Activated CD4-positive, alpha-beta memory T cell treated with anti-CD3 and anti-CD28 coated beads for 36 hours (primary cell): ENCODE measurements at regions of chr3 and their contacts with region 1.

Region 1: GRCh38 chr3:72665701-72666443 is 182.4 kb downstream of the SHQ1 start:
- DNase-seq: peak; percentile 69
- H3K4me3 Mint-ChIP-seq: no peak overlapping the region
- H3K27ac Mint-ChIP-seq: no peak overlapping the region
- H3K4me1 Mint-ChIP-seq: no peaks in the 10 kb centered on the region
- H3K27me3 Mint-ChIP-seq: no peaks in the 10 kb centered on the region

Region 2: GRCh38 chr3:72538070-72538745 is 127.7 kb before region 1 on chr3:
- CTCF ChIA-PET with region 1: no interaction called
- POLR2A ChIA-PET with region 1: no interaction called
- intact Hi-C with region 1: no loop called
- DNase-seq: peak; percentile 40
- H3K4me3 Mint-ChIP-seq: no peak overlapping the region
- H3K27ac Mint-ChIP-seq: no peak overlapping the region
- H3K4me1 Mint-ChIP-seq: peaks cover 21% of the 10 kb centered on the region
- H3K27me3 Mint-ChIP-seq: peaks cover 7% of the 10 kb centered on the region

Region 3: DNA sequence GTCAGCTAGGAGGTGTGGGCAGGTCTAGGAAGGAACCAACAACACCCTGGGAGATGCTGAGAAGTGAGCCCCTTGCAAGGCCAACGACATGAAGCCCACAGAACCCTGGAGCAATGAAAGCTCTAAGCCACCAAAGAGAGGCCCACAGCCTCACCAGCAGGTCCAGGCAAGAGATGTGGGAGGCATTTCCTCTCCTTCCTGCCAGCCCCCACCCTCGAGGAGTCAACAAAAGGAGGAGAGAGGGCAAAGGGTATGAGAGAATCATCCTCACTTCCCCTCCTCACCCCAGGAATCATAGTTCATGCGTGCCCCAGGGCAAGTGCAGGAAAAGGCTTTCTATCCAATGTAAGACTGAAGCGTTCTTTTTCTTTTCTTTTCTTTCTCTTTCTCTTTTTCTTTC is 13.5 kb before region 1 on chr3:
- CTCF ChIA-PET with region 1: interaction called, 17 read pairs
- POLR2A ChIA-PET with region 1: no interaction called
- intact Hi-C with region 1: no loop called
- DNase-seq: no peak
- H3K4me3 Mint-ChIP-seq: no peak overlapping the region
- H3K27ac Mint-ChIP-seq: no peak overlapping the region
- H3K4me1 Mint-ChIP-seq: peaks cover 2% of the 10 kb centered on the region
- H3K27me3 Mint-ChIP-seq: peaks cover 8% of the 10 kb centered on the region

Region 4: DNA sequence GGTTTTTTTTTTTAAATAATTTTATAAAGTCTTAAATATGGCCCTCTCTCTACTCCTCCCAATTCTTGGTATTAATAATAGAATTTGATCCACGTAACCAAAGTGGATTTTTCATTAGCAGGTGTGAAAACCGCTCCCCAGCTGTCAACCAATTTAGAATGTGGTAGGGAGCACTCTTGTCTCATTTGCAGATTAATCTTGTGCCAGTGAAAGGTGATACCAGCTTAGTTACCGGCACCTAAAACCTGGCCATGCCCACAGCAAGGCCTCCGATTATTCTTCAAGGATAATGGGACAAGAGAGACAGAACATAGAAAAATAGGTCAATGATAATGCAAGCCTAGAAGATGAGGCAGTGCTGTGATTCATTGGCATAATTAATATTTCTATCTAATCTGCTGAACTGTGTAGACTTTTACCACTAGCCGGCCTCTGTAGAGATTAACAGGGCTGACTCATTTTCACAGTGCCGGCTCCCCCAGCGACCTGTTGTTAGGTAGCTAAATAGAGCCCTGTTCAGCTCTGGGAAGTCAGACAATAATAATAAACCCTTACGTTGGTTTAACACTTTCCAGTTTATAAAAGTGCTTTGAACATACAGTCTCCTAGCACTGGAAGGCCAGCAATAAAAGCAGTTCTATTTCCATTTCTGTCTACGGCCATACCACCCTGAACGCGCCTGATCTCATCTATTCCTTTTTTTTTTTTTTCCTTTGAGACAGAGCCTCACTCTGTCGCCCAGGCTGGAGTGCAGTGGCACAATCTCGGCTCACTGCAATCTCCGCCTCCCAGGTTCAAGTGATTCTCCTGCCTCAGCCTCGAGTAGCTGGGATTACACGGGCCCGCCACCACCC is 79.5 kb after region 1 on chr3:
- CTCF ChIA-PET with region 1: no interaction called
- POLR2A ChIA-PET with region 1: no interaction called
- intact Hi-C with region 1: no loop called
- DNase-seq: no peak
- H3K4me3 Mint-ChIP-seq: no peak overlapping the region
- H3K27ac Mint-ChIP-seq: no peak overlapping the region
- H3K4me1 Mint-ChIP-seq: peaks cover 2% of the 10 kb centered on the region
- H3K27me3 Mint-ChIP-seq: no peaks in the 10 kb centered on the region

Region 5: DNA sequence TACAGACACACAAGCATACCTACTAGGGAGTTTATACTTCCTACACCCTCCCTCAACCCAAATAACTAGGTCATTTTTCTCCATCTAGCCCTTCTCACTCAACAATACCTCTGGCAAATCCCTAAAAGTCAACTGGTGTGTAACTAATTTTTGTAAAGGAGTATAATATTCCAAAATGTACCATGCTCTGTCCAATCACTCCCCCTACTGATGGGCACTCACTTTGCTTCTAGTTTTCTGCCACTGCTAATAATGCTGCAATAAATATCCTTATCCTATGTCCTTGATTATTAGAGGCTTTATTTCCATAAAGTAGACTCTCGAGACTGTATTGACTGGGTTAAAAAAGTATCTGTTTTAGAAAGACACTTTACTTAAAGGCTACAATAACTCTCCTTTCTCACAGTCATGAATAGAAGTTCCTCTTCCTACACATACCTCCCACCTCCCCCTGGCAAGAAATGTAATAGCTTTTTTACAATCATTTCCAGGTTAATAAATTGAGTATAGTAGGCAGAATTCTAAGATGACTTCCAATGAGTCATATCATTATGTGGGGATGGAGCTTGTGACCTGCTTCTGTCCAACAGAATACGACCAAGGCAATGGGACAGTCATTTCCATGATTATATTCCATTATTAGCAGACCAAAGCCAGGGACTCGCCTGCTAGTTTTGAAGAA is 152.4 kb after region 1 on chr3:
- CTCF ChIA-PET with region 1: interaction called, 80 read pairs
- POLR2A ChIA-PET with region 1: no interaction called
- intact Hi-C with region 1: loop called (anchors 1 kb)
- DNase-seq: no peak
- H3K4me3 Mint-ChIP-seq: no peak overlapping the region
- H3K27ac Mint-ChIP-seq: no peak overlapping the region
- H3K4me1 Mint-ChIP-seq: peaks cover 22% of the 10 kb centered on the region
- H3K27me3 Mint-ChIP-seq: no peaks in the 10 kb centered on the region

Region 6: DNA sequence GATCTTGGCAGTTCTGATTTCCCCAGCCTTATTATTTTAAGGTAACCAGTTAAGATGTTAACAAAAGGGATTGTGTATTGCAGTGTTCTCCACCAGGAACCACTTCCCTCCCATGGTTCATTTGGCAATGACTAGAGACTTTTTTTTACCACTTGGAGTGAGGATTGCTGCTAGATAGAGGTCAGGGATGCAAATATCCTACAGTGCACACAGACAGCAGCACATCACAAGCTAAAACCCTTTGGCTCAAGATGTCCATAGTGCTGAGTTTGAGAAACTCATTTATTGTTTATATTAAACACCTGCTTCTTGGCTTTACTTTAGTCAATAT is 371.5 kb after region 1 on chr3:
- CTCF ChIA-PET with region 1: no interaction called
- POLR2A ChIA-PET with region 1: no interaction called
- intact Hi-C with region 1: no loop called
- DNase-seq: no peak
- H3K4me3 Mint-ChIP-seq: no peak overlapping the region
- H3K27ac Mint-ChIP-seq: peak overlapping the region; percentile 62
- H3K4me1 Mint-ChIP-seq: peaks cover 91% of the 10 kb centered on the region
- H3K27me3 Mint-ChIP-seq: no peaks in the 10 kb centered on the region

Region 7: GRCh38 chr3:73086071-73086494 is 420.2 kb after region 1 on chr3:
- CTCF ChIA-PET with region 1: interaction called, 5 read pairs
- POLR2A ChIA-PET with region 1: no interaction called
- intact Hi-C with region 1: loop called (anchors 1 kb)
- DNase-seq: peak; percentile 62
- H3K4me3 Mint-ChIP-seq: no peak overlapping the region
- H3K27ac Mint-ChIP-seq: no peak overlapping the region
- H3K4me1 Mint-ChIP-seq: peaks cover 11% of the 10 kb centered on the region
- H3K27me3 Mint-ChIP-seq: no peaks in the 10 kb centered on the region

Region 8: DNA sequence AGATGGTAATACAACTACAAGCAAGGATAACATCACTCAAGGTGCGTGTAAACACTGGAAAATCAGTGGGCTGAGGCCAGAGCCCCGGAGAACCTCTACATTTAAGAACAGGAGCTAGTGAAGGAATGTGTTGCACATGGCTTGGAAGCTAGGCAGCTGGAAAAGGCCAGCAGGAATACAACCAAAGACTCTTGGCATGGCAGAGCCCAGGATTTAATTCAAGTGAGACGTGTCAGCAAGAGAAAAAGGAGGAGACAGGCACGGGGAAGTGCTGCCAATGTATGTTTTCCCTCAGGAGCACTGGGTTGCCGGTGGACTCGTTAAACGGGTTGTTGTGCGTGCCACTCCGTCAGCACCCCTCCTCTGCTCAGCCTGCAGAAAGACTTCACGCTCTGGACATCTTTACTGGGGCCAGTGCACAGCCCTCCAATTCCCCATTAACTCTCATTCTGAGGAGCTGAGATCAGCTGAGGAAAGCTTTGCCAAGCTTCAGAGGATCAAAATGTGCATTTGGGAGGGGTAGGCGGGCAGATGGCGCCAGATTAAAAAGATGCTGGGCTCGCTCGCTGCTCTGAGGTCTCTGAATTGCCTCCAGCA is 855.1 kb after region 1 on chr3:
- CTCF ChIA-PET with region 1: no interaction called
- POLR2A ChIA-PET with region 1: no interaction called
- intact Hi-C with region 1: no loop called
- DNase-seq: no peak
- H3K4me3 Mint-ChIP-seq: no peak overlapping the region
- H3K27ac Mint-ChIP-seq: no peak overlapping the region
- H3K4me1 Mint-ChIP-seq: no peaks in the 10 kb centered on the region
- H3K27me3 Mint-ChIP-seq: no peaks in the 10 kb centered on the region